GM12878 (cell line): ENCODE measurements at regions of chr6 and their contacts with region 1.

Region 1: GRCh38 chr6:17987576-17988421 is at the start of gene KIF13A:
- DNase-seq: no peak
- ATAC-seq: peak; percentile 88
- H3K4me3 ChIP-seq: peak within 1 kb of the TSS; percentile 68; the same call in 1 of the 2 replicates
- H3K27ac ChIP-seq: no peak within 1 kb of the TSS
- H3K4me1 ChIP-seq: peaks cover 6% of the 10 kb centered on the region
- H3K27me3 ChIP-seq: peaks cover 6 to 21% of the 10 kb centered on the region in 2 experiments
- CTCF ChIP-seq: peak in 2 of 3 experiments; percentile 10 to 14; a peak in 2 of 6 replicates
- EP300 ChIP-seq: no peak
- POLR2A ChIP-seq: 0 out of 2 replicates have a peak, but pooled peaks have one; percentile 22
- RAD21 ChIP-seq: no peak
- polyA plus RNA-seq, gene KIF13A: 0.02 to 0.07 TPM

Region 2: GRCh38 chr6:17884498-17885478 is 103.0 kb before region 1 on chr6:
- CTCF ChIA-PET with region 1: no interaction called
- POLR2A ChIA-PET with region 1: no interaction called
- RAD21 ChIA-PET with region 1: no interaction called
- SMC1A ChIA-PET with region 1: no interaction called
- in situ Hi-C with region 1: no loop called
- intact Hi-C with region 1: loop called (anchors 5 kb)
- DNase-seq: peak; percentile 80
- ATAC-seq: peak; percentile 89
- H3K4me3 ChIP-seq: 0 out of 2 replicates have a peak overlapping the region, but pooled peaks have one; percentile 8
- H3K27ac ChIP-seq: peak overlapping the region; percentile 22; the same call in 1 of the 2 replicates
- H3K4me1 ChIP-seq: peaks cover 18% of the 10 kb centered on the region
- H3K27me3 ChIP-seq: no peaks in the 10 kb centered on the region; a peak in 1 of 4 replicates
- CTCF ChIP-seq: no peak
- EP300 ChIP-seq: peak; percentile 64 to 75
- POLR2A ChIP-seq: no peak
- RAD21 ChIP-seq: no peak

Region 3: DNA sequence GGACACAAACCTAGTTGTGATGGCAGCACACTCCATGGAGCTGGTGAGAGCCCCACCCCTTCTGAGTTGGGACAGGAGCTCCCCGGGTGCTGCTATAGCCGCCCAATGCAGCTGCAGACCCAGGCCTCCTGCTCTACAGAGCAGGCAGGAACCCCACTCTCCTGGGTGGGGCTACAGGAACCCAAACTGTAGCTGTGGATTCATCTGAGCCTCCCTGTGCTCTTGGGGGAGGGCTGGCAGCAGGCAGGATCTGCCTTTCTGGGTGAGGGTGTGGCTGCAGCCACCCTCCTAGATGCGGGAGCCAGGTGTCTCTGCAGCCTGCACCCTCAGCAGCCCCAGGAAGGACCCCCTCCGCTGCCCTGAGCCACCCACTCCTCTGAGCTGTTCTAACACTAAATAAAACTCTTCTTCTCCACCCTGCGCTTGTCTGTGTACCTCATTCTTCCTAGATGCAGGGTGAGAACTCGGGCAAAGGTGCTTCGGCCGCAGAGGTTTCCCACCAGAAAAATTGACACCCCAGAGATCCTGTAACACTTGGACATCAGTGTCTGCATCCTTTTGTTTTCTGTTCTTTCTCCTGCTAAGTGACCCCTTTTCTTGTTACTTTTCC is 54.8 kb after region 1 on chr6:
- CTCF ChIA-PET with region 1: no interaction called
- POLR2A ChIA-PET with region 1: no interaction called
- RAD21 ChIA-PET with region 1: no interaction called
- SMC1A ChIA-PET with region 1: no interaction called
- in situ Hi-C with region 1: no loop called
- intact Hi-C with region 1: no loop called
- DNase-seq: no peak
- ATAC-seq: no peak; the same call in 2 of the 3 replicates
- H3K4me3 ChIP-seq: no peak overlapping the region
- H3K27ac ChIP-seq: no peak overlapping the region
- H3K4me1 ChIP-seq: no peaks in the 10 kb centered on the region
- H3K27me3 ChIP-seq: no peaks in the 10 kb centered on the region
- CTCF ChIP-seq: no peak
- EP300 ChIP-seq: no peak
- POLR2A ChIP-seq: no peak
- RAD21 ChIP-seq: no peak